ENCODE measurements at regions of chr12 and their contacts with region 1.

Region 1: DNA sequence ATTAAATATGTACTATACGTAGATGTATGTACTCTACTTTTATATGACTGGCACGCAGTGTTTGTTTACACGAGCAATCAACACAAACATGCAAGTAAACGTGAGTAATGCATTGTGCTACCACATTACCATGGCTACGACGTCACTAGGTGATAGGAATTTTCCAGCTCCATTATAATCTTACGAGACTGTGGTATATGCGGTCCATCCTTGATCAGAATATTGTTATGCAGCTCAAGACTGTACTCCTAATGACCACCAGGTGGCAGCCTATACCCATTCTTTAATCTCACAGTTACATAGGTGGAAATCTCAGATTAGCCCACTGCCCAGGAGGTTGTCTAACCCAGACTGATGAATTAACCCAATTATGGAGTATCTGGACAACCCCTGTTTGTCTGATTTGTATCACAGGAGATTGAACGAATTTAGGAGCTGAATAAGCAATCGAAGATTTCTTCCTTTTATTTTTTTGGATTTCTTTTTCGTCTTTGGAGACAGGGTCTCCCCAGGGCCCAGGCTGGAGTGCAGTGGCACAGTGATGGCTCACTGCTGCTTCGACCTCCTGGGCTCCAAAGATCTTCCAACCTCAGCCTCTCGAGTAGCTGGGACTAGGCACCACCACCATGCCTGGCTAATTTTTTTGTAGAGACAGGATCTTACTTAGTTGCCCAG is 8.7 kb upstream of the TESPA1 start:
- DNase-seq: peak; percentile 60
- H3K4me3 Mint-ChIP-seq: no peak overlapping the region
- H3K27ac Mint-ChIP-seq: no peak overlapping the region
- H3K4me1 Mint-ChIP-seq: peaks cover 40% of the 10 kb centered on the region
- H3K27me3 Mint-ChIP-seq: no peaks in the 10 kb centered on the region

Region 2: GRCh38 chr12:54749191-54749818 is 244.0 kb before region 1 on chr12:
- CTCF ChIA-PET with region 1: interaction called, 59 read pairs
- POLR2A ChIA-PET with region 1: interaction called, 3 read pairs
- DNase-seq: peak; percentile 39
- H3K4me3 Mint-ChIP-seq: peak overlapping the region; percentile 36
- H3K27ac Mint-ChIP-seq: no peak overlapping the region
- H3K4me1 Mint-ChIP-seq: peaks cover 19% of the 10 kb centered on the region
- H3K27me3 Mint-ChIP-seq: no peaks in the 10 kb centered on the region

Region 3: GRCh38 chr12:54853995-54854566 is 139.2 kb before region 1 on chr12 and contains the start of gene MUCL1:
- CTCF ChIA-PET with region 1: interaction called, 15 read pairs
- POLR2A ChIA-PET with region 1: no interaction called
- DNase-seq: peak; percentile 76
- H3K4me3 Mint-ChIP-seq: no peak within 1 kb of the TSS
- H3K27ac Mint-ChIP-seq: no peak within 1 kb of the TSS
- H3K4me1 Mint-ChIP-seq: peaks cover 10% of the 10 kb centered on the region
- H3K27me3 Mint-ChIP-seq: peaks cover 7% of the 10 kb centered on the region
- total RNA-seq, gene MUCL1: not detected

Region 4: DNA sequence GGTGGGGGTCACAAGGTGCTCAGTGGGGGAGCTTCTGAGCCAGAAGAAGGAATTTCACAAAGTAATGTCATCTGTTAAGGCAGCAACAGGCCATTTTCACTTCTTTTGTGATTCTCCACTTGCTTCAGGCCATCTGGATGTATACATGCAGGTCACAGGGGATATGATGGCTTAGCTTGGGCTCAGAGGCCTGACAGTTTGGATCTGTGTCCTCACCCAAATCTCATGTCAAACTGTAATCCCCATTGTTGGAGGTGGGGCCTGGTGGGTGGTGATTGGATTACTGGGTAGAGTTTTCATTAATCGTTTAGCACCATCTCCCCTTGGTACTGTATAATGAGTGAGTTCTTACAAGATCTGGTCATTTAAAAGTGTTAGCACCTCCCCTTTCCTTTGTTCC is 45.1 kb before region 1 on chr12:
- CTCF ChIA-PET with region 1: no interaction called
- POLR2A ChIA-PET with region 1: no interaction called
- DNase-seq: no peak
- H3K4me3 Mint-ChIP-seq: no peak overlapping the region
- H3K27ac Mint-ChIP-seq: no peak overlapping the region
- H3K4me1 Mint-ChIP-seq: peaks cover 18% of the 10 kb centered on the region
- H3K27me3 Mint-ChIP-seq: no peaks in the 10 kb centered on the region

Region 5: DNA sequence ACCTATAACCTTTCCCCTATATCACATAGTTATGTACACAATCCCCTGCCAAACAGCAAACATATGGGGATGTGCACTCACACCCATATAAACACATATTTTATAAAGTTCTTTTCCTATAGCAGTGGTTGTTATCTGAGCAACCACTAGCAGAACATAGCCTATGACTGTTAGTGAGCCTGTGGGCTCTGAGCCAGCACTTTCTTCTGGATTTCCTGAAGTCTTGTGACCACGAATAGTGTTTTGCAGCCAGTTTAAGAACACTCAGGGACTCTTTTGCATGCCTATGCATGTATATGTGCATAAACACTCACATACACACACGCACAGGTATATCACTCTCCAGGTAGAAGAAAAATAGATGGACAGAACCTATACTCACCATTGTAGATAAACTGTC is 25.8 kb before region 1 on chr12:
- CTCF ChIA-PET with region 1: interaction called, 11 read pairs
- POLR2A ChIA-PET with region 1: interaction called, 4 read pairs
- DNase-seq: no peak
- H3K4me3 Mint-ChIP-seq: no peak overlapping the region
- H3K27ac Mint-ChIP-seq: peak overlapping the region; percentile 79
- H3K4me1 Mint-ChIP-seq: peaks cover 46% of the 10 kb centered on the region
- H3K27me3 Mint-ChIP-seq: no peaks in the 10 kb centered on the region

Region 6: GRCh38 chr12:55008944-55009585 is 15.8 kb after region 1 on chr12:
- CTCF ChIA-PET with region 1: interaction called, 11 read pairs
- POLR2A ChIA-PET with region 1: interaction called, 4 read pairs
- DNase-seq: no peak
- H3K4me3 Mint-ChIP-seq: no peak overlapping the region
- H3K27ac Mint-ChIP-seq: no peak overlapping the region
- H3K4me1 Mint-ChIP-seq: no peaks in the 10 kb centered on the region
- H3K27me3 Mint-ChIP-seq: peaks cover 5% of the 10 kb centered on the region

Region 7: GRCh38 chr12:55065535-55065934 is 72.2 kb after region 1 on chr12:
- CTCF ChIA-PET with region 1: interaction called, 452 read pairs
- POLR2A ChIA-PET with region 1: interaction called, 7 read pairs
- DNase-seq: no peak
- H3K4me3 Mint-ChIP-seq: no peak overlapping the region
- H3K27ac Mint-ChIP-seq: no peak overlapping the region
- H3K4me1 Mint-ChIP-seq: peaks cover 6% of the 10 kb centered on the region
- H3K27me3 Mint-ChIP-seq: peaks cover 4% of the 10 kb centered on the region

Measured in activated CD4-positive, alpha-beta memory T cell treated with anti-CD3 and anti-CD28 coated beads, Interleukin-2, amount 10 ng/mL, durations not matched to agents 7 days and 5 days (primary cell).